ENCODE measurements at regions of chr3 and their contacts with region 1.

Region 1: GRCh38 chr3:14178247-14179113 is at the starts of genes LSM3 and XPC:
- DNase-seq: peak; percentile 97 to 100 (median 98)
- ATAC-seq: peak; percentile 85 to 88
- H3K4me3 Mint-ChIP-seq: peak within 1 kb of the TSS; percentile 88 to 100 (median 98)
- H3K27ac Mint-ChIP-seq: peak within 1 kb of the TSS; percentile 97 to 100 (median 100)
- H3K4me1 Mint-ChIP-seq: peaks cover 32 to 75% (median 74%) of the 10 kb centered on the region in 4 donors
- H3K27me3 Mint-ChIP-seq: no peaks in the 10 kb centered on the region
- polyA plus RNA-seq, gene LSM3: 20.8 to 26.5 (median 24.8) TPM
- polyA plus RNA-seq, gene XPC: 28.5 to 49.6 (median 49.4) TPM

Region 2: GRCh38 chr3:14124615-14125190 is 53.8 kb before region 1 on chr3 and contains the starts of genes CHCHD4 and TMEM43:
- POLR2A ChIA-PET with region 1: interaction called, 124 read pairs
- DNase-seq: peak; percentile 96 to 100 (median 98)
- ATAC-seq: peak; percentile 88 to 92
- H3K4me3 Mint-ChIP-seq: peak within 1 kb of the TSS; percentile 92 to 97 (median 95)
- H3K27ac Mint-ChIP-seq: peak within 1 kb of the TSS; percentile 87 to 98 (median 96)
- H3K4me1 Mint-ChIP-seq: peaks cover 37 to 76% (median 64%) of the 10 kb centered on the region in 4 donors
- H3K27me3 Mint-ChIP-seq: no peaks in the 10 kb centered on the region
- polyA plus RNA-seq, gene CHCHD4: 6.8 to 15.8 (median 11.5) TPM
- polyA plus RNA-seq, gene TMEM43: 45.6 to 65.0 (median 56.0) TPM

Region 3: DNA sequence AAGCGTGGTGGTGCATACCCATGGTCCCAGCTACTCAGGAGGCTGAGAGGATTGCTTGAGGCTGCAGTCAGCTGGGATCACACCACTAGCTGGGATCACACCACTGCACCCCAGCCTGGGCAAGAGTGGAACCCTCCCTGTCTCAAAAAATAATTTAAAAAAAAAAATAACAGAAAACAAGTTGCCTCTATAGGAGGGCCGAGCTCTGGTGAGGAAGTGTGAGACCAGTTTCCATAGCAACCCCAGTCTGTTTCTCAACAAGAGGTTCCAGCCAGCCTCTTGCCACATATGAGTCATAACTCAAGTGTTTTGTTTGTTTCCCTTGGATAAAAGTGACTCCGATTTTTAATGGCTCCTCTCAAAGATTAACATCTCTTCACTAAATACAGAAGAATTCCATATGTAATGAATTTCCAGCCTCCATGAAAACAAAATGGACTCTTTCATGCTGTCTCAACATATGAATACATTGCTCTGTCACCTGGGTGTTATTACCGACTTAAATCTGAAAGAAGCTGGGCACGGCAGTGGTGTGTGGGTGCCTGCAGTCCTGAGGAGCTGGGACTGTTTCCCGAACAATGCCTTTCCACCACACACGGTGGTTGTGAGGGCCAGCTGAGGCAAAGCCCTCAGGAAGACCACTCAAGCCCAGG is 33.9 kb before region 1 on chr3:
- POLR2A ChIA-PET with region 1: interaction called, 54 read pairs
- DNase-seq: peak; percentile 34 to 91 (median 75)
- ATAC-seq: peak; percentile 70
- H3K4me3 Mint-ChIP-seq: peak overlapping the region; percentile 33 to 84 (median 70)
- H3K27ac Mint-ChIP-seq: peak overlapping the region; percentile 98 to 100 (median 99)
- H3K4me1 Mint-ChIP-seq: peaks cover 24 to 63% (median 54%) of the 10 kb centered on the region in 4 donors
- H3K27me3 Mint-ChIP-seq: no peaks in the 10 kb centered on the region

Region 4: GRCh38 chr3:14402304-14402811 is 223.9 kb after region 1 on chr3 and contains the start of gene SLC6A6:
- POLR2A ChIA-PET with region 1: interaction called, 10 read pairs
- DNase-seq: peak; percentile 84 to 97 (median 92)
- ATAC-seq: peak; percentile 80
- H3K4me3 Mint-ChIP-seq: peak within 1 kb of the TSS; percentile 85 to 99 (median 97)
- H3K27ac Mint-ChIP-seq: peak within 1 kb of the TSS; percentile 92 to 99 (median 98)
- H3K4me1 Mint-ChIP-seq: peaks cover 23 to 58% (median 49%) of the 10 kb centered on the region in 4 donors
- H3K27me3 Mint-ChIP-seq: no peaks in the 10 kb centered on the region
- polyA plus RNA-seq, gene SLC6A6: 2.1 to 5.0 (median 3.0) TPM